Spleen (tissue), 13 donors: ENCODE measurements at regions of chr10 and their contacts with region 1.

Region 1: GRCh38 chr10:20858292-20859124 is 38.6 kb downstream of the NEBL start:
- DNase-seq: no peak
- H3K4me3 ChIP-seq: no peak overlapping the region
- H3K27ac ChIP-seq: no peak overlapping the region
- H3K4me1 ChIP-seq: no peaks in the 10 kb centered on the region
- H3K27me3 ChIP-seq: no peaks in the 10 kb centered on the region
- CTCF ChIP-seq: peak in 3 of 11 experiments; percentile 19 to 33 (median 28)
- POLR2A ChIP-seq: no peak

Region 2: GRCh38 chr10:19412531-19412930 is 1446.0 kb before region 1 on chr10:
- intact Hi-C with region 1: loop called (anchors 10 kb)
- DNase-seq: no peak
- H3K4me3 ChIP-seq: no peak overlapping the region
- H3K27ac ChIP-seq: no peak overlapping the region
- H3K4me1 ChIP-seq: no peaks in the 10 kb centered on the region
- H3K27me3 ChIP-seq: no peaks in the 10 kb centered on the region
- CTCF ChIP-seq: peak in 5 of 11 experiments; percentile 15 to 26 (median 22)
- POLR2A ChIP-seq: no peak

Region 3: GRCh38 chr10:20334559-20334958 is 523.9 kb before region 1 on chr10:
- intact Hi-C with region 1: no loop called
- DNase-seq: no peak
- H3K4me3 ChIP-seq: no peak overlapping the region
- H3K27ac ChIP-seq: no peak overlapping the region
- H3K4me1 ChIP-seq: no peaks in the 10 kb centered on the region
- H3K27me3 ChIP-seq: no peaks in the 10 kb centered on the region
- CTCF ChIP-seq: no peak
- POLR2A ChIP-seq: no peak

Region 4: GRCh38 chr10:20745556-20746375 is 112.7 kb before region 1 on chr10:
- intact Hi-C with region 1: no loop called
- DNase-seq: no peak
- H3K4me3 ChIP-seq: no peak overlapping the region
- H3K27ac ChIP-seq: no peak overlapping the region
- H3K4me1 ChIP-seq: no peaks in the 10 kb centered on the region
- H3K27me3 ChIP-seq: no peaks in the 10 kb centered on the region
- CTCF ChIP-seq: no peak
- POLR2A ChIP-seq: no peak